ENCODE measurements at regions of chr2 and their contacts with region 1.

Region 1: GRCh38 chr2:41414486-41415230 is 633.2 kb upstream of the PKDCC start:
- DNase-seq: no peak
- ATAC-seq: peak in 1 of 2 donors; percentile 29
- H3K4me3 ChIP-seq: no peak overlapping the region
- H3K27ac ChIP-seq: no peak overlapping the region
- H3K4me1 ChIP-seq: no peaks in the 10 kb centered on the region
- H3K27me3 ChIP-seq: no peaks in the 10 kb centered on the region

Region 2: DNA sequence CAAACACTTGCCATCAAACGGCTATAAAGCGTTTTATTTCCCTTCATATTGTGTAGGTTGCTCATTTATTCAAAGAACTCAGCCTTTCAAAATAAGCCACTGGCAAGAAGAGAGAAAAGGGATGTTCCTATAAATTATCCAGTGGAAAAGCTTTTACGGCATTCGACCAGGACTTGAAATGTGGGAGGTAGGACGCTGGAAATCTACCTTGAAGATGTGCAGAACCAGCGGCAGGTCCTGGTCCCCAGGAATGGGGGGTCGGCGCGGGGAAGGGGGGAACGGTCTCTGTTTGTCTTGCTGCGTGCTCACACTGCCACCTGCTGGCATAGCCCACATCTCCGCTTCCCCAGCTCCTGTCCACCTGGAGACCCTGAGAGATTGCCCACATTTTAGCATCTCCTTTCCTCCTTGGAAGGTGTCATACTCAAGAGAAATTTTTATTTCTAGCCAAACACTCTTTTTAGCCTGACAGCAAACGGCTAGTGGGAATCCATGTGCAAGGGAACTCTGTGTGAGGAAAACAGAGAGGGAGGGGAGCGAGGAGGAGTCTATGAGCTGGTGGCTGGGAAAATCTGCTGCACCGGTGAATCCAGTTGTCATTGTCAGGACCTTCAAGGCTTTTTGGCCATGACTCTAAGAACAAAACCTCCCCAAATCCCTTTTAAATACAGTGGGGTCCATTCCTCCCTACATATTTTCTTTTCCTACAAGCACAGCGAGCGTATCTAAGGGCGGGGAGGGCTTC is 284.2 kb after region 1 on chr2:
- intact Hi-C with region 1: loop called in 2 of 4 experiments (anchors 10 kb)
- DNase-seq: peak; percentile 45 to 86 (median 78)
- ATAC-seq: peak; percentile 64 to 73
- H3K4me3 ChIP-seq: no peak overlapping the region
- H3K27ac ChIP-seq: no peak overlapping the region
- H3K4me1 ChIP-seq: no peaks in the 10 kb centered on the region
- H3K27me3 ChIP-seq: no peaks in the 10 kb centered on the region

Region 3: DNA sequence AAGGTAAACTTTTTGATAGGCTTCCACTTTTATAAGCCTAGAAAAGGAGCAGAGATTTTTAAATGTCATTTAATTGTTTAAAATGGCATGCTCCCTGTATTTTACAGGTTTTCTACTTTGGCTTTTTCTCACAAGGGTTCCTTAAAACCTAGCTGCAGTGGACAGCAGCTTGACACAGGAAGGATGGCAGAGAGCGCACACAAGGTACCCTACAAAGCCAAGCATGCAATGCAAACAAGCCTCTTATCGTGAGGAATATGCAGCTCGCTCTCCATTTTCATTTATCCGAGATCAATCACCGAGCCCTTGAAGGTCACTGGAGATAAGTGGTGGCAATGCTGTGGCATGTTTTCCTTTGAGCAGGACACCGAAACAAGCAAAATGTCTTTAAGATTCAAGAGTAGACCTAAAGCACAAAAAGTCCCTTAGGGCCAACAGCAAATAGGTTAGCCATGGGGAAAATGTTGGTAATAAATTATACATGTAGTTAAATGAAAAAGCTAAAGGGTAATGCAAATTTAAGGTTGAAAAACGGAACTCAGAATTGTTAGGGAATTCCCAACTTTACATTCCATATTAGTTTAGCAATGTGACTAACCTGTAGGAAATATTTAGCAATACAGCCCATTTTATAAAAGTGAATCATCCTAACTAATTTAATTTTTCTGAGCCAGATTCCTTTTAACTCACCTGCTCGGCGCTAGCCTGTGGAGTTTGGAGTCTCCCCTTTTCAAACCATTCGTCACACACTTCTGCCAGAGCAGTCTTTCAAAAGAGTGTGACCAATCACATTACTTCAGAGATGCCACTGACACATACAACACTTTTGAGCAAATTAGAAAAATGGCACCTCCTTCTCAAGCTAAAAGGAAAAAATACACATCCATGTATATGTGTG is 295.3 kb after region 1 on chr2:
- intact Hi-C with region 1: loop called in 1 of 4 experiments (anchors 10 kb)
- DNase-seq: no peak
- ATAC-seq: no peak
- H3K4me3 ChIP-seq: no peak overlapping the region
- H3K27ac ChIP-seq: no peak overlapping the region
- H3K4me1 ChIP-seq: no peaks in the 10 kb centered on the region
- H3K27me3 ChIP-seq: no peaks in the 10 kb centered on the region